ENCODE measurements at regions of chr6 and their contacts with region 1.

Region 1: GRCh38 chr6:151675746-151676416 is 131.6 kb upstream of the ESR1 start:
- DNase-seq: peak; percentile 85
- H3K4me3 Mint-ChIP-seq: no peak overlapping the region
- H3K27ac Mint-ChIP-seq: no peak overlapping the region
- H3K4me1 Mint-ChIP-seq: peaks cover 3% of the 10 kb centered on the region
- H3K27me3 Mint-ChIP-seq: peaks cover 5% of the 10 kb centered on the region

Region 2: GRCh38 chr6:151661928-151662327 is 14.0 kb before region 1 on chr6:
- intact Hi-C with region 1: no loop called
- DNase-seq: no peak
- H3K4me3 Mint-ChIP-seq: no peak overlapping the region
- H3K27ac Mint-ChIP-seq: no peak overlapping the region
- H3K4me1 Mint-ChIP-seq: no peaks in the 10 kb centered on the region
- H3K27me3 Mint-ChIP-seq: peaks cover 25% of the 10 kb centered on the region

Region 3: GRCh38 chr6:151723152-151723551 is 47.3 kb after region 1 on chr6:
- intact Hi-C with region 1: loop called (anchors 1 kb)
- DNase-seq: peak; percentile 79
- H3K4me3 Mint-ChIP-seq: peak overlapping the region; percentile 29
- H3K27ac Mint-ChIP-seq: peak overlapping the region; percentile 64
- H3K4me1 Mint-ChIP-seq: peaks cover 26% of the 10 kb centered on the region
- H3K27me3 Mint-ChIP-seq: peaks cover 11% of the 10 kb centered on the region

Region 4: GRCh38 chr6:152124429-152125074 is 448.7 kb after region 1 on chr6:
- intact Hi-C with region 1: loop called (anchors 1 kb)
- DNase-seq: no peak
- H3K4me3 Mint-ChIP-seq: no peak overlapping the region
- H3K27ac Mint-ChIP-seq: no peak overlapping the region
- H3K4me1 Mint-ChIP-seq: no peaks in the 10 kb centered on the region
- H3K27me3 Mint-ChIP-seq: no peaks in the 10 kb centered on the region

Region 5: GRCh38 chr6:152267967-152268845 is 592.3 kb after region 1 on chr6:
- intact Hi-C with region 1: loop called (anchors 1 kb)
- DNase-seq: peak; percentile 76
- H3K4me3 Mint-ChIP-seq: no peak overlapping the region
- H3K27ac Mint-ChIP-seq: no peak overlapping the region
- H3K4me1 Mint-ChIP-seq: peaks cover 8% of the 10 kb centered on the region
- H3K27me3 Mint-ChIP-seq: no peaks in the 10 kb centered on the region

Region 6: DNA sequence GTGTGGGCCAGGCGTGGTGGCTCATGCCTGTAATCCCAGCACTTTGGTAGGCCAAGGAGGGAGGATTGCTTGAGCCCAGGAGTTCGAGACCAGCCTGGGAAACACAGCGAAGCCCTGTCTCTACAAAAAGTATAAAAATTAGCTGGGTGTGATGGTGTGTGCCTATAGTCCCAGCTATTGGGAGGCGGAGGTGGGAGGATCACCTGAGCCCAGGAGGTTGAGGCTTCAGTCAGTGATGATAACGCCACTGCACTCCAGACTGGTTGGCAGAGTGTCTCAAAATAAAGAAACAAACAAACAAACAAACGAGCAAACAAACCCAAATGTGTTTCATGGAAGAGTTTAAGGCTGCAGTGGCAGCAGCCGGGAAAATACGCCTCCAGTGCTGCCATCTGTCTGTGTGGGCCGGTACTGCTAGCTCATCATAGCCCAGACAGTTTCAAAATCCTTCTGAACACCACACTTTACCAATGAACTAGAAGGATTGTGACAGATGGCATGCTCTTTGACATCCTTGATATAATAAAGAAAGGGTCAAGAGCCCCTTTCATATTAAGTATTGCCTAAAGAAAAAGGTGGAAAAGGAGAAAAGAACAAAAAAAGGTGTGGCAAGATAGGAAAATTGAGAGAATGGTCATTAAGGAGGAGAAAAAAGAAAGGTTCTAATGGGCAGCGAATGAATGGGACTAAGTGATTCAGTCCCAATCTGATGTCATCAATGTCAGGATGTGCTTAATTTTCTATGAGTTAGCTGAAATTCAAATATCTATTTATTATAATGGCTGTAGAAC is 662.6 kb after region 1 on chr6:
- intact Hi-C with region 1: loop called (anchors 10 kb)
- DNase-seq: peak; percentile 87
- H3K4me3 Mint-ChIP-seq: no peak overlapping the region
- H3K27ac Mint-ChIP-seq: no peak overlapping the region
- H3K4me1 Mint-ChIP-seq: peaks cover 2% of the 10 kb centered on the region
- H3K27me3 Mint-ChIP-seq: peaks cover 16% of the 10 kb centered on the region

Region 7: DNA sequence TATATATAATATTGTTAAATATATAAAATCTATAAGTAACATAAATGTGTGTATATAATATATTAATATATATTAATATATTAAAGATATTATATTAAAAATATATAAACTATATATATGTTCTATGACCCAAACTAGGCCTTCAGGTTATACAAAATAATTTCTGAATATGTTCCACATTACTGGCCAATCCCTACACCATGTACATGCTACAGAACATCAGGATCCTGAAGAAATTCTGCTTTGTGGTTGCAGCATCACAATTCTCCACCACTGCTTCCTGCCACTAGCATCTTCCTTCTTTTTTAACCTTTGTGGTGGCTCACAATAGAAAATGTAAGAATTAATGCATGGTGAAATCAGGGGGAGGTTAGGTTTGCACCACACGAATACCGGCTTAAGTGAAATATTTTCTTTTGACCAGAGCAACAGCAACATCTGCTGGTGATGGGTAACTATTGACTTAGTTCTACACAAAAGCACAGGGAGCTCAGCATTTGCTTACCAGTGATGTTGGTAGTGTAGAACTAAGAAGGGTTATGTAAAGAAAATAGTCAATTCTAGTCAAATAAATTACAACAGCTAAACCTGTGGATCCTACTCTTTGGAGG is 680.7 kb after region 1 on chr6:
- intact Hi-C with region 1: loop called (anchors 5 kb)
- DNase-seq: peak; percentile 64
- H3K4me3 Mint-ChIP-seq: no peak overlapping the region
- H3K27ac Mint-ChIP-seq: no peak overlapping the region
- H3K4me1 Mint-ChIP-seq: peaks cover 2% of the 10 kb centered on the region
- H3K27me3 Mint-ChIP-seq: peaks cover 4% of the 10 kb centered on the region